ENCODE measurements at regions of chr11 and their contacts with region 1.

Region 1: DNA sequence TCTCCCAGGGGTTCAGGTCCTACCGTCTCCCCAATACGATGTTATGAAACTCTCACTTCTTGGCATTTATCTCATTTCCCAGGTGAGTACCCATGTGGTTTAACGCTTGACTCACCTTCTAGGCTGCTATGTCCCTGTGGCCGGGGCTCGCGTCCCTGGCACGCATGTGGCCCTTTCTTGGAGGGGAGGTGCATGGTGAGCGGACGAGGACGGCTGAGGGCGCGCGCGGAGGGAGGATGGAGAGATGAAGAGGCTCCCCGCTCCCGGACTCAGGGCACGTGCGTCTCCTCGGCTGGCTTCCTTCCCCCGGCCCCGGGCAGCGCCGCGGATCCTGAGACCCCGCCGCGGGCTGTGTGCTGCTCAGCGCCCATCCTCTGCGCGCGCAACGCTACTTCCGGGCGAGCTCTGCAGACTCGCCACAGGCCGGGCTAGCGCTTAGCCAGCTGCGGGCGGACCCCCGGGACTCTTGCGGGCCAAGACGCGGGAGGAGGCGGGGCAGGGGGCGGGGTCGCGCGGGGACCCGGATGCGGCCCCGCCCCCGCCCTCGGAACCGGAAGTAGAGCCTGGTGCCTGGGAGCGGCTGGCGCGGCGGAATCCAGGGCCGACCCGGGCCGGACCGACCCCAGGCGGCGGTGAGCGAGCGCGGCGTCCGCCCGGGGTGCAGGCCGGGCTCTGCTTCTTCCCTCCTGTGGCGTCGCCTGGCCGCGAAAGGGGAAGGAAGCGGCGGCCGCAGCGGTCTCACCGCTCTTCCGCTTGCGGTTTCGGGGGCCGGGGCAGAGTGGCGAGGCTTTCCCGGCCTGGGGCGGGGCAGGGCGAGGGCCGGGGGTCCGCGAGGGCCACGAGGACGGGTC is at the start of gene CTTN:
- DNase-seq: peak; percentile 90 to 95
- ATAC-seq: peak; percentile 90
- H3K4me3 ChIP-seq: peak within 1 kb of the TSS; percentile 96
- H3K27ac ChIP-seq: peak within 1 kb of the TSS; percentile 38 to 86
- H3K4me1 ChIP-seq: peaks cover 0 to 4% of the 10 kb centered on the region in 2 donors
- H3K27me3 ChIP-seq: no peaks in the 10 kb centered on the region
- total RNA-seq, gene CTTN: 280 to 355 TPM

Region 2: GRCh38 chr11:70270104-70270876 is 127.9 kb before region 1 on chr11 and contains the start of gene PPFIA1:
- intact Hi-C with region 1: loop called in 1 of 2 experiments (anchors 5 kb)
- DNase-seq: peak; percentile 97 to 98
- ATAC-seq: peak; percentile 99
- H3K4me3 ChIP-seq: peak within 1 kb of the TSS; percentile 90 to 93
- H3K27ac ChIP-seq: no peak within 1 kb of the TSS
- H3K4me1 ChIP-seq: no peaks in the 10 kb centered on the region
- H3K27me3 ChIP-seq: no peaks in the 10 kb centered on the region
- total RNA-seq, gene PPFIA1: 73.4 to 74.7 TPM

Region 3: GRCh38 chr11:70364745-70365543 is 33.3 kb before region 1 on chr11:
- intact Hi-C with region 1: loop called (anchors 5 kb)
- DNase-seq: peak in 1 of 2 donors; percentile 55
- ATAC-seq: no peak
- H3K4me3 ChIP-seq: no peak overlapping the region
- H3K27ac ChIP-seq: peak overlapping the region in 1 of 2 donors; percentile 92
- H3K4me1 ChIP-seq: peaks cover 0 to 5% of the 10 kb centered on the region in 2 donors
- H3K27me3 ChIP-seq: no peaks in the 10 kb centered on the region

Measured in aorta (tissue), 5 donors.